Activated naive CD4-positive, alpha-beta T cell treated with anti-CD3 and anti-CD28 coated beads for 36 hours (primary cell): ENCODE measurements at regions of chr11 and their contacts with region 1.

Region 1: GRCh38 chr11:62427630-62428233 is 8.9 kb downstream of the SCGB1A1 start:
- DNase-seq: peak; percentile 28
- H3K4me3 Mint-ChIP-seq: peak overlapping the region; percentile 0
- H3K27ac Mint-ChIP-seq: peak overlapping the region; percentile 54
- H3K4me1 Mint-ChIP-seq: peaks cover 28% of the 10 kb centered on the region
- H3K27me3 Mint-ChIP-seq: no peaks in the 10 kb centered on the region

Region 2: GRCh38 chr11:61347916-61348461 is 1079.7 kb before region 1 on chr11:
- CTCF ChIA-PET with region 1: no interaction called
- intact Hi-C with region 1: no loop called
- DNase-seq: no peak
- H3K4me3 Mint-ChIP-seq: no peak overlapping the region
- H3K27ac Mint-ChIP-seq: no peak overlapping the region
- H3K4me1 Mint-ChIP-seq: no peaks in the 10 kb centered on the region
- H3K27me3 Mint-ChIP-seq: no peaks in the 10 kb centered on the region

Region 3: DNA sequence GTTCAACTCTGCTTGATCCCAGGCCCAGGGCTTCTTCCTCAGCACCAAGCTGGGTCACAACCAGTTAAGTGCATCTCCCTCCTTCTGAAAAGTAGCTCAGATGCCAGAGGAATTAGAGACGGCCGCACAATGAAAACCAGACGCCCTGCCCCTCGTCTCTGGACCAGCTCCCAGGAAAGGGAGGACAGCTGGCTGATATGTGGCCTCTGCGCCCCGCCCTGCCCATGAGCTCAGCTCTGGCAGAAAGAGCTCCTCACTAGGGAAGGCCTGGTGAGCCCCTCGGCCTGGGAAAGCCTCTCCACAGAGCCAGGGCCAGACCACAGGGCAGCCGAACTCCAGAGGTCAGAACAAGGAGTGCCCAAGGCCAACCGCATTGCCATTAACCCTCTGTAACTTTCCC is 27.0 kb before region 1 on chr11:
- CTCF ChIA-PET with region 1: interaction called, 20 read pairs
- intact Hi-C with region 1: no loop called
- DNase-seq: no peak
- H3K4me3 Mint-ChIP-seq: peak overlapping the region; percentile 84
- H3K27ac Mint-ChIP-seq: no peak overlapping the region
- H3K4me1 Mint-ChIP-seq: peaks cover 39% of the 10 kb centered on the region
- H3K27me3 Mint-ChIP-seq: no peaks in the 10 kb centered on the region

Region 4: GRCh38 chr11:62444236-62444833 is 16.6 kb after region 1 on chr11:
- CTCF ChIA-PET with region 1: interaction called, 20 read pairs
- intact Hi-C with region 1: no loop called
- DNase-seq: peak; percentile 73
- H3K4me3 Mint-ChIP-seq: peak overlapping the region; percentile 79
- H3K27ac Mint-ChIP-seq: no peak overlapping the region
- H3K4me1 Mint-ChIP-seq: peaks cover 7% of the 10 kb centered on the region
- H3K27me3 Mint-ChIP-seq: peaks cover 27% of the 10 kb centered on the region

Region 5: DNA sequence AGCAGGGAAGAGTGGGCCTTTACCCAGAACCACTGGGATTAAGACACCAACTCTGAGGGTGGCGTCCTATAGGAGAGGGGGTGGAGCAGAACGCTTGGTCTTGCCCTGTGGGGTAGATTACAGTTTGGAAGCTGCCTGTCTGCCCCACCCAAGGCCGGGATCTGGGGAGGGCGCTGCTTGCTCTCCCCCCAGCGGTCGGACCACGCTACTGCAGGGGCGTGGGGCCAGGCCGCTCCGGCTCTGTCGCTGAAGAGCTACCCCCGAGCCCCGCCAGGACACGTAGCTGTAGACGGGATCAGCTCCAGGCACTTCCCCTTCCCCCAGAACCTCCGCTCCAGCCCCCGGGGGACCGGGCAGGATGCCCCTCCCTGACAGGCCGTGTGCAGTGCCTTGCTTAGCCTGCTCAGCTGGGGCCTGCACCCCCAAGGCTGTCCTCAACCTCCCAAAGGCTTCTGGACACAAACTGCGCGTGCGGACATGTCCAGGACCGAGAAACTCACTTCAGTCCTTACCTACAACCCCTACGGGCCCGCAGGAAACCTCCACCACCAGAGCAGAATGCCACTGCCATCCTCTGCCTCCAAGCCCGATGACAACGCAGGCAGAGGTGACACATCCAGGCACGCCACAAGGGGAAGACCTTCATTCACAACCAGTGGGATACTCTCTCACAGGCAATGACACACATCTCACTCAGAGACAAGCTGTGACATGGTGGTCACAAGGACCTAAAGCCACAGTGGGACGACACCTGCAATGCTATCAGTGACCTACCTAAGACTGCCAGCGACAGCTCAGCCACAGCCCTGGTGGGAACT is 115.2 kb after region 1 on chr11:
- CTCF ChIA-PET with region 1: interaction called, 96 read pairs
- intact Hi-C with region 1: loop called (anchors 1 kb)
- DNase-seq: peak; percentile 78
- H3K4me3 Mint-ChIP-seq: peak overlapping the region; percentile 32
- H3K27ac Mint-ChIP-seq: no peak overlapping the region
- H3K4me1 Mint-ChIP-seq: peaks cover 70% of the 10 kb centered on the region
- H3K27me3 Mint-ChIP-seq: peaks cover 4% of the 10 kb centered on the region

Region 6: DNA sequence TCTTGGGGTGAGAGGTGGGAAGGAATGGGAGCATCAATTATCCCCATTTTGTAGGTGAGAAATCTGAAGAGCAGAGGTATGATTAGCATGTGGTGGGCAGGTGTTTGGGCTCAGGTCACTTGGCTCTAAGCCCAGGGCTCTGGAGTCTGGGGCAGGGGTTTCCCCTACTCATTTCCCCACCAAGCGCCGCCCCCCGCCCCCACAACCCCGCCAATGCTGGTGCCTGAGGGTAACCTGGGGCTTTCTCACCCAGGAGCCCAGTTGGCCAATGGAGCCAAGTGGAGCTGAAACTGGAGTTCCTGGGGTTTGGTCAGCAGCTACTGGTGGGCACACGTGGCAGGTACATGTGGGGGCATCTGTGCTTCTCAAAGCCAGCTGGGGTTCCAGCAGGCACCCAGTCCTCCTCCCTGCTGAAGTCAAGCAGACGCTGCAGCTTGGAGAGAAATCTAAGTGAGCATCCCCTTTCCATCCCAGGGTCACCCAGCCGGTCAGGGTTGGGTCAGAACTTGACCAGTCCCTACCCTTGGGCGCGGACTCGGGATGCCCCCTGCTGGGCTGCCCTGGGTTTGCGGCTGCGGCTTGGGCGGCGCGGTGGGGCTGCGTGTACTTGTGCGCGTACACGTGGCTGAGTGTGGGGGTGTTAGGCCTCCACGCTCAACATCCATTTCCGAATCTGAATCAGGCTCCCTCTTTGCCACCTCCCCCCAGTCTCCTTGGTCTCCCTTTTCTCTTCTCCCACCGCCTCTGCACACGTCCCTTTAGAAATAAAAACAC is 495.1 kb after region 1 on chr11:
- CTCF ChIA-PET with region 1: no interaction called
- intact Hi-C with region 1: no loop called
- DNase-seq: peak; percentile 57
- H3K4me3 Mint-ChIP-seq: peak overlapping the region; percentile 34
- H3K27ac Mint-ChIP-seq: no peak overlapping the region
- H3K4me1 Mint-ChIP-seq: peaks cover 31% of the 10 kb centered on the region
- H3K27me3 Mint-ChIP-seq: peaks cover 53% of the 10 kb centered on the region